ENCODE measurements at regions of chr13 and their contacts with region 1.

Region 1: GRCh38 chr13:105207572-105208293 is 1327.7 kb downstream of the EFNB2 start:
- DNase-seq: peak; percentile 13
- ATAC-seq: peak; percentile 48; the same call in 1 of the 2 replicates
- H3K4me3 ChIP-seq: no peak overlapping the region
- H3K27ac ChIP-seq: no peak overlapping the region
- H3K4me1 ChIP-seq: no peaks in the 10 kb centered on the region
- H3K27me3 ChIP-seq: no peaks in the 10 kb centered on the region
- CTCF ChIP-seq: 0 out of 2 replicates have a peak, but pooled peaks have one; percentile 9
- POLR2A ChIP-seq: no peak
- RAD21 ChIP-seq: no peak

Region 2: GRCh38 chr13:105127732-105128131 is 80.0 kb before region 1 on chr13:
- CTCF ChIA-PET with region 1: no interaction called
- POLR2A ChIA-PET with region 1: no interaction called
- dilution Hi-C with region 1: no loop called
- in situ Hi-C with region 1: no loop called
- intact Hi-C with region 1: no loop called
- DNase-seq: no peak
- ATAC-seq: no peak
- H3K4me3 ChIP-seq: no peak overlapping the region
- H3K27ac ChIP-seq: no peak overlapping the region
- H3K4me1 ChIP-seq: no peaks in the 10 kb centered on the region
- H3K27me3 ChIP-seq: no peaks in the 10 kb centered on the region
- CTCF ChIP-seq: no peak
- POLR2A ChIP-seq: no peak
- RAD21 ChIP-seq: no peak

Region 3: DNA sequence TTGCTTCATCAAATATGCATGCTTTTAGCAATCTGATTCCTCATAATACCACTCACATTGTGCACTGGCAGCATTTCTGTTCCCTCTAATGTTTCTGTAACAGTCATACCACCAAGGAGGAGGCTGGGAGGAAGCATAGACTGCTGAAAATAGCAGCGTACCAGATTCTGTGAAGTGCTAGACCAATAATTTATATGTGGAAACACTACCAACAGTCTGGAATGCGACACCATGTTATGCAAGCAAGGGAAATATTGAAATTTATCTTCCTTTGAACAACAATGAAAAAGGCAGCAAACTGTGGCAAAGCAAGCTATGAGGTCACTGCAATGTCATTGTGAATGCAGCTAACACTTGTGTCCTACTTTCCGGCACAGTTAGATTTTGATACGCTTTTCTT is 60.3 kb before region 1 on chr13:
- CTCF ChIA-PET with region 1: no interaction called
- POLR2A ChIA-PET with region 1: no interaction called
- dilution Hi-C with region 1: no loop called
- in situ Hi-C with region 1: no loop called
- intact Hi-C with region 1: loop called (anchors 2 kb)
- DNase-seq: no peak
- ATAC-seq: no peak
- H3K4me3 ChIP-seq: no peak overlapping the region
- H3K27ac ChIP-seq: no peak overlapping the region
- H3K4me1 ChIP-seq: no peaks in the 10 kb centered on the region
- H3K27me3 ChIP-seq: no peaks in the 10 kb centered on the region
- CTCF ChIP-seq: no peak
- POLR2A ChIP-seq: no peak
- RAD21 ChIP-seq: no peak

Region 4: DNA sequence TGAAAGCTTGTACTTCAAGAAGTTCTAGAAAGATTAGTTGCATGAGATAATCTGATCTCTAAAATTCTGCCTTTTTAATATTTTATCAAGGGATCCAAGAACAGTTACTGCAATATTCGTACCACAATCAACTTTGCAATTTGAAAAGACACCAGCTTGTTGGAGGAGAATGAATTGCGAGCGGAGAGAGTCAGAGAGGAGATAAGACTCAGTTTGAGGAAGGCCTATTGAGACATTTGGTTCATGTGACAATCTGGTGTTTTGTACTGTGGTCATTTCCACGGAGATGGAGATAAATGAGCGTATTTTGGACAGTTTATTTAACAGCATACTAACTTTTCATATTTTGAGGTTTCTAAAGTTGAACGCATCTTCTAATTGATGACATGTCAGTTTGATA is 51.7 kb after region 1 on chr13:
- CTCF ChIA-PET with region 1: no interaction called
- POLR2A ChIA-PET with region 1: no interaction called
- dilution Hi-C with region 1: no loop called
- in situ Hi-C with region 1: no loop called
- intact Hi-C with region 1: no loop called
- DNase-seq: no peak
- ATAC-seq: no peak
- H3K4me3 ChIP-seq: no peak overlapping the region
- H3K27ac ChIP-seq: no peak overlapping the region
- H3K4me1 ChIP-seq: no peaks in the 10 kb centered on the region
- H3K27me3 ChIP-seq: no peaks in the 10 kb centered on the region
- CTCF ChIP-seq: no peak
- POLR2A ChIP-seq: no peak
- RAD21 ChIP-seq: no peak

Region 5: DNA sequence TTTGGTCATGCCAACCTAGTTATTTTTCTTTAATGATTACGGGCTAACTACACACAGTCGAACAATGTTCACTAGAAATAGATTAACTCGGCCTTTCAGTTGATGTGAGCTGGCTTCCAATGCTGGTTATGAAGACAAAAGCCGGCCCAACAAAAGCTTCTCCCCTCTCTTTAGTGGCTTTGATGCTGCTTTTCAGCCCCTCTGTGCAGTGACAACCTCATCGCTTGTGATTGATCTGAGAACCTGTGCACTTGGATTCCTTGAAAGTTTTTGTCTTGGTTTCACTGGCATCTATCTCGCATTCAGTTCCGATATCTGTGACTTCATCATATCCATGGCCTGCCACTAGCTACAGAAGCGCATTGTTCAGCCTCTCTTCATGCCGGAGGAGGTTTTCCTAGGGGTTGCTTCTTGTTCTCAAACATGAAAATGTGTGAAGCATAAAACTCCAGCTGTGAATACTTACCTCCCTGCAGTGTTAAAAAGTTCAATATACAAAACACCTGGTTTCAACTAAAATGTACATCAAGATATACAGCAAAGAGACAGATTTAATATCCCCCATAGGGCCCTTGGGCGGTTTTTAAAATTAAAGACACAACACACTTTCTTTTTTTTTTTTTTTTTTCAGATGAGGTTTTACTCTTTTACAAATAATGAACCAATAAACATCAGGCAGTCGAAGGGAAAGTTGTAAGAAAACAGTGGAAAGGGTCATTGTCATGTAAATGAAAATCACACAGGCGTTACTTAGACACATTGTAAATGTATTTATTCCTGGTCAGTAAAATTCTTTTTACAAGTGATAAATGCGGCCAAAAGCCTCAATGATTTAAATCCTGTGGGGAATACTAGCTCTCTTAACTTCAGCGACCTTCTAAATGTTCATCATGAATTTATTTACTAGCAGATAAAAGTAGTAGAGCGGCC is 74.9 kb after region 1 on chr13:
- CTCF ChIA-PET with region 1: no interaction called
- POLR2A ChIA-PET with region 1: no interaction called
- dilution Hi-C with region 1: no loop called
- in situ Hi-C with region 1: no loop called
- intact Hi-C with region 1: no loop called
- DNase-seq: no peak
- ATAC-seq: no peak
- H3K4me3 ChIP-seq: no peak overlapping the region
- H3K27ac ChIP-seq: no peak overlapping the region
- H3K4me1 ChIP-seq: no peaks in the 10 kb centered on the region
- H3K27me3 ChIP-seq: no peaks in the 10 kb centered on the region
- CTCF ChIP-seq: no peak
- POLR2A ChIP-seq: no peak
- RAD21 ChIP-seq: no peak

Region 6: DNA sequence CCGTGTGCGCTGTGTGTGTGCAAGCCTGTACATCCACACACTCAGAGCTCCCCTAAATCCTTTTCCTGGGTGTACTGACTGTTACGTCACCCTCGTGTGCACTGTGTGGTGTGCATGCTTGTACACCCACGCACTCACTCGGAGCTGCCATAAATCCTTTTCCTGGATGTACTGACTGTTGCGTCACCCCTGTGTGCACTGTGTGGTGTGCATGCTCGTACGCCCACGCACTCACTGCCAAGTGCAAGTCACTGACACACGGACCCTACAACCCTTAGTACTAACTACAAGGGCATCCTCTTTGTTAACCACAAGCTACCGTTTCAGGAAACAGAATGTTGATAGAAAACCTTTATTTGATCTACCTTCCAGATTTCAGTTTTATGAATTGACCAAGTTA is 344.3 kb after region 1 on chr13:
- CTCF ChIA-PET with region 1: no interaction called
- POLR2A ChIA-PET with region 1: no interaction called
- dilution Hi-C with region 1: no loop called
- in situ Hi-C with region 1: no loop called
- intact Hi-C with region 1: no loop called
- DNase-seq: no peak
- ATAC-seq: no peak
- H3K4me3 ChIP-seq: no peak overlapping the region
- H3K27ac ChIP-seq: no peak overlapping the region
- H3K4me1 ChIP-seq: no peaks in the 10 kb centered on the region
- H3K27me3 ChIP-seq: no peaks in the 10 kb centered on the region
- CTCF ChIP-seq: no peak
- POLR2A ChIP-seq: no peak
- RAD21 ChIP-seq: no peak

Measured in IMR-90 (cell line).